ENCODE measurements at regions of chr20 and their contacts with region 1.

Region 1: GRCh38 chr20:49074536-49074935 is 28.4 kb downstream of the CSE1L start:
- DNase-seq: no peak
- ATAC-seq: no peak
- H3K4me3 ChIP-seq: no peak overlapping the region
- H3K4me3 Mint-ChIP-seq: no peak overlapping the region
- H3K27ac ChIP-seq: no peak overlapping the region
- H3K27ac Mint-ChIP-seq: no peak overlapping the region
- H3K4me1 ChIP-seq: no peaks in the 10 kb centered on the region
- H3K4me1 Mint-ChIP-seq: no peaks in the 10 kb centered on the region
- H3K27me3 ChIP-seq: no peaks in the 10 kb centered on the region
- H3K27me3 Mint-ChIP-seq: no peaks in the 10 kb centered on the region
- CTCF ChIP-seq: no peak

Region 2: GRCh38 chr20:49024220-49024619 is 50.3 kb before region 1 on chr20:
- CTCF ChIA-PET with region 1: no interaction called
- POLR2A ChIA-PET with region 1: no interaction called
- intact Hi-C with region 1: loop called in 1 of 2 experiments (anchors 5 kb)
- DNase-seq: peak in 1 of 14 experiments; percentile 3
- ATAC-seq: no peak
- H3K4me3 ChIP-seq: no peak overlapping the region
- H3K4me3 Mint-ChIP-seq: no peak overlapping the region
- H3K27ac ChIP-seq: no peak overlapping the region
- H3K27ac Mint-ChIP-seq: no peak overlapping the region
- H3K4me1 ChIP-seq: no peaks in the 10 kb centered on the region
- H3K4me1 Mint-ChIP-seq: no peaks in the 10 kb centered on the region
- H3K27me3 ChIP-seq: no peaks in the 10 kb centered on the region
- H3K27me3 Mint-ChIP-seq: no peaks in the 10 kb centered on the region
- CTCF ChIP-seq: no peak

Measured in CD4-positive, alpha-beta T cell (primary cell).